ENCODE measurements at regions of chr1 and their contacts with region 1.

Region 1: GRCh38 chr1:230568008-230568407 is 74.3 kb upstream of the COG2 start:
- DNase-seq: peak; percentile 82
- H3K4me3 Mint-ChIP-seq: peak overlapping the region; percentile 59
- H3K27ac Mint-ChIP-seq: peak overlapping the region; percentile 84
- H3K4me1 Mint-ChIP-seq: peaks cover 57% of the 10 kb centered on the region
- H3K27me3 Mint-ChIP-seq: no peaks in the 10 kb centered on the region
- CTCF ChIP-seq: peak; percentile 61

Region 2: GRCh38 chr1:230149751-230150584 is 418.0 kb before region 1 on chr1:
- CTCF ChIA-PET with region 1: no interaction called
- intact Hi-C with region 1: no loop called
- DNase-seq: no peak
- H3K4me3 Mint-ChIP-seq: no peak overlapping the region
- H3K27ac Mint-ChIP-seq: no peak overlapping the region
- H3K4me1 Mint-ChIP-seq: peaks cover 22% of the 10 kb centered on the region
- H3K27me3 Mint-ChIP-seq: no peaks in the 10 kb centered on the region
- CTCF ChIP-seq: no peak

Region 3: DNA sequence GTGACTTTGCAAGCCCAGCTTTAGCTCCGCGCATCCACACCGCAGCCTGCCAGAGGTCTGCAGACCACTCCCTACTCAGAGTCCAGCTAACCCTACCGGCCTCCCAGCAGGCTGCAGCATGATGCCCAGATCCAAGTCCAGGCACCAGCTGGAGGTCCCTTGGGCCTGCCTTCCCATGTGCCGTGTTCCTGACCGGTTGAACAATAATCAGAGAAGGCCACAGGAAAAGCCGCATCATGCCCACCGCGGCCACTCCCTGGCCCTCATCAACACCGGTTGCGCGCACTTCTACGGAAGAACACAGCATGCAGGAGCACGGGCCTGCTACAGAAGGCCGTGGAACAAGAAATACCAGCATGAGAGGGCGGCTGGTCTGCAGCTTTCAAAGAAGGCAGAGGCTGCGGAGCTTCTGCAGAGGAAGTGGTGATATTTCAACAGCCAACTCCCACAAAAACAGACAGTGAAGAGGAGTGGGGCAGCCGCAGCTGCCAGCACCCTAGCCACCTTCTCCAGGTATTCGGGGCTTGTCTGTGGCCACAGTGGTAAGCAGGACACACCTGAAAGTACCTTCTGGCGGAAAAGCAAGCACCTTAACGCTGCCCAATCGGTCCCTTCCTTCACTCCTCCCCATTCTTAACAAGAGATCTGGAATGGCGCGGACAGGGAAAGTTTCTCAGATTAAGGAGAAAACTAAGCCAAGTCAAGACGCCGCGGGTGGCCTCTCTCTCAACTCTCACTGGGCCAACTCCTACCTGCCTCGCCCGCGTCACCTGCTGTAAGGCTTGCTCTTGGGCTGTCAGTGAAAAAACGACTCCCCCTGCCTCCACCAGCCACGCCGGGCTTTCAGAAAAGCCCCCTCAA is 143.4 kb before region 1 on chr1:
- CTCF ChIA-PET with region 1: interaction called, 4 read pairs
- intact Hi-C with region 1: loop called (anchors 5 kb)
- DNase-seq: peak; percentile 46
- H3K4me3 Mint-ChIP-seq: peak overlapping the region; percentile 96
- H3K27ac Mint-ChIP-seq: peak overlapping the region; percentile 74
- H3K4me1 Mint-ChIP-seq: peaks cover 46% of the 10 kb centered on the region
- H3K27me3 Mint-ChIP-seq: no peaks in the 10 kb centered on the region
- CTCF ChIP-seq: no peak

Region 4: GRCh38 chr1:230517786-230518185 is 50.2 kb before region 1 on chr1:
- CTCF ChIA-PET with region 1: no interaction called
- intact Hi-C with region 1: loop called (anchors 5 kb)
- DNase-seq: peak; percentile 26
- H3K4me3 Mint-ChIP-seq: no peak overlapping the region
- H3K27ac Mint-ChIP-seq: no peak overlapping the region
- H3K4me1 Mint-ChIP-seq: peaks cover 18% of the 10 kb centered on the region
- H3K27me3 Mint-ChIP-seq: no peaks in the 10 kb centered on the region
- CTCF ChIP-seq: no peak

Region 5: GRCh38 chr1:230642263-230642959 is 74.4 kb after region 1 on chr1 and contains the start of gene COG2:
- CTCF ChIA-PET with region 1: interaction called, 3 read pairs
- intact Hi-C with region 1: loop called (anchors 5 kb)
- DNase-seq: peak; percentile 99
- H3K4me3 Mint-ChIP-seq: peak within 1 kb of the TSS; percentile 99
- H3K27ac Mint-ChIP-seq: peak within 1 kb of the TSS; percentile 95
- H3K4me1 Mint-ChIP-seq: peaks cover 47% of the 10 kb centered on the region
- H3K27me3 Mint-ChIP-seq: no peaks in the 10 kb centered on the region
- CTCF ChIP-seq: peak; percentile 99
- total RNA-seq, gene COG2: 55.0 and 59.2 TPM in 2 replicates

Region 6: GRCh38 chr1:230681599-230681998 is 113.6 kb after region 1 on chr1:
- CTCF ChIA-PET with region 1: interaction called, 3 read pairs
- intact Hi-C with region 1: loop called (anchors 5 kb)
- DNase-seq: peak; percentile 74
- H3K4me3 Mint-ChIP-seq: no peak overlapping the region
- H3K27ac Mint-ChIP-seq: no peak overlapping the region
- H3K4me1 Mint-ChIP-seq: peaks cover 37% of the 10 kb centered on the region
- H3K27me3 Mint-ChIP-seq: no peaks in the 10 kb centered on the region
- CTCF ChIP-seq: no peak